GM10248 (cell line): ENCODE measurements at regions of chr10 and their contacts with region 1.

Region 1: DNA sequence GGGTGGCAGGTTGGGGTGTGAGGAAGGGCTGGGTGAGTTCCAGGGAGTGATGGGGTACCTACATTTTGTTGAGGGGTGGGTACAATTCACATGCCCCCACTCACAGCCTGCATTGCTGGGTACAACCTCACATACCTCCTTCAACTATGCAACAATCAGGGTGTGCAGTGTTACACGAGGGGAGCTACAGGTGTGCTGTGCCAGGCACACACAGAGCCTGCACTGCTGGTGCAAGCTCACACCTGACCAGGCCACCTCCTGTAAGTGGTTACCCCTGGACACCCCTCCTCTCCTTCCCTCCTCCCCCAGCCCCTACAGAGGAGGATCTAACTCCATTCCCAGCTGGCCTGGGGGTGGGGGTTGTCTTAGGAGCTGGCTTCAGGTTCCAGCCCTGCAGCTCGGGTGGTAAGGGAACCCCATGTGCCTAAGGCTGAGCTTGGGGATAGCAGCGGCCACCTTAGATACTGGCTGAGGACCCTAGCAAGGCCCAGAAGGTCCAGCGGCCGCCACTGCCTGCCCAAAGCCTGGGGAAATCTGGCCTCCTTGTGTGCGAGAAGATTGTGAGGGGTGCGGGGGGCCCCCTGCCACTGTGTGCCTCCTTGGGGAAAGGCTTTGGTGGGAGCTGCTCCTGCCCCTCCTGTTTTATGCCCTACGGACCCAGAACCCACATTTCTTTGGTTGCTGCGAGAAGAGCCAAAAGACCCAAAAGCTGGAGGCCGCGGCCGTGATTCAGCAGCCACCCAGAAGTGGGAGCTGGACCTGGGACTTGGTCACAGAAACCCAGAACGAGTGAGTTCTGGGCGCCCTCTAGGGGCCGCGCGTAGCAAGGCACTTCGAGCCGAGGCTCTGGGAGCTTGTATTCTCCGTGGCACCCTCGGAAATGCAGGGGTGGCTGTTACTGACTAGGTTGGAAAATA is 10.8 kb downstream of the TLX1 start:
- DNase-seq: peak; percentile 88
- CTCF ChIP-seq: peak; percentile 96

Region 2: DNA sequence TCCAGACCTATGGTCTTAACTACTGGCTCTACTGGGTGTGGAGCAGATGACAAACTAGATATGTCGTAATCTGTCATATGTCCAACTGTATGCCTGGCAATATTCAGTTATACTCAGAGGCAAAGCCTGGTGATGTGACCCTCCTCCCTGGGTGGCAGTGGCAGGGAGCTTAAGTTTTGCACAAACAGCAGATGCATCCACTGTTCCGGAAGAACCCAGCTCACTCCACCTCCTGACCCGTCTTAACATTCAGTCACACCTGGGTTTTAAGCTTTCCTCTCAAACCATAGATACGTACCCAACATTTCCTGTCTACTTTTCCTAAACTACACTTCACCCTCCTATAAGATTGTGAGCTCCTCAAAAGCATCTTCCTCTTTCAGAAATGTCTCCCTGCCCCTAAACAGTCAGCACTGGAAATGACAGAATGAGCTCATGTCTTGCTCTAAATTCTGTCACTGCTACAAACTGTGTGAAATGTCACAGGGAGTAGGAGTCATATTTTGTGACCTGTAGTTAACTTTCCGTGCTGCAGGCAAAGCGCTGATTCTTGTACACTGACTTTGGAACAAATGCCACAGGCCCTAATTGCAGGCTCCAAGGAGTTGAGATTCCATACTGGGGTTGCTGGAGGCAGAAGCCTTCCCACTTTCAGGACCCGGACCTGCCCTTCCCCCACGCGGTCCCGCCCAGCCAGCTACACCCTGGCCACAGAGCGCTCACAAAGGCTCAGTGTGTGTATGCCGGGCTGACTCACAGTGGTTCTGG is 771.0 kb before region 1 on chr10:
- CTCF ChIA-PET with region 1: no interaction called
- POLR2A ChIA-PET with region 1: no interaction called
- DNase-seq: peak; percentile 54
- CTCF ChIP-seq: no peak

Region 3: DNA sequence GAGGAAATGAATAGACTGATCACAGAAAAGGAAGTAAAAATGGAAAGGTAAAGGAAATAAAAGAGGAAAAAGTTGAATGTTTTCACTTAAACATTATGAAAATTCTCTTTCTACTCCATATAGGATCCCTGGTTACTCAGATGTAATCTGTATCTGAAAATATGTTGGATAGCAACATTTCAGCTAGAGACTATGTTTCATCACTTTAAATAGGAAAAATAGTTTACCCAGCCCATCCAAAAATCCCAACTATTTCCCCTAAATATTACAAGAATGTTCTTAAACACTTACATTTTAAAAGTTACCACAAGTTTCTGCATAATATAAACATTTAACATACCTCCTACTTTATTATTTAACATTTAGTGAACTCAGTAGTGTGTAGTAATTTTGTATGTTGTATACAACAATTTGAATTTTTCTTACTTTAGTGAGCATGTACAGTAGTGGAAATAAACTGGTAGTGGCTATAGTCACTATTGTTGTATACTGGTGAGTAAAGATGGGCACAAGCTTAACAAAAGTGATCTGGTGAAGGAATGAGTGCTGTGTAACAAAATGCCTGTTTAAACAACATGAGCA is 202.0 kb before region 1 on chr10:
- CTCF ChIA-PET with region 1: no interaction called
- POLR2A ChIA-PET with region 1: no interaction called
- DNase-seq: no peak
- CTCF ChIP-seq: no peak

Region 4: GRCh38 chr10:101031128-101031795 is 110.6 kb before region 1 on chr10 and contains the starts of genes PDZD7 and SFXN3:
- CTCF ChIA-PET with region 1: interaction called, 14 read pairs
- POLR2A ChIA-PET with region 1: no interaction called
- DNase-seq: peak; percentile 97
- CTCF ChIP-seq: no peak

Region 5: DNA sequence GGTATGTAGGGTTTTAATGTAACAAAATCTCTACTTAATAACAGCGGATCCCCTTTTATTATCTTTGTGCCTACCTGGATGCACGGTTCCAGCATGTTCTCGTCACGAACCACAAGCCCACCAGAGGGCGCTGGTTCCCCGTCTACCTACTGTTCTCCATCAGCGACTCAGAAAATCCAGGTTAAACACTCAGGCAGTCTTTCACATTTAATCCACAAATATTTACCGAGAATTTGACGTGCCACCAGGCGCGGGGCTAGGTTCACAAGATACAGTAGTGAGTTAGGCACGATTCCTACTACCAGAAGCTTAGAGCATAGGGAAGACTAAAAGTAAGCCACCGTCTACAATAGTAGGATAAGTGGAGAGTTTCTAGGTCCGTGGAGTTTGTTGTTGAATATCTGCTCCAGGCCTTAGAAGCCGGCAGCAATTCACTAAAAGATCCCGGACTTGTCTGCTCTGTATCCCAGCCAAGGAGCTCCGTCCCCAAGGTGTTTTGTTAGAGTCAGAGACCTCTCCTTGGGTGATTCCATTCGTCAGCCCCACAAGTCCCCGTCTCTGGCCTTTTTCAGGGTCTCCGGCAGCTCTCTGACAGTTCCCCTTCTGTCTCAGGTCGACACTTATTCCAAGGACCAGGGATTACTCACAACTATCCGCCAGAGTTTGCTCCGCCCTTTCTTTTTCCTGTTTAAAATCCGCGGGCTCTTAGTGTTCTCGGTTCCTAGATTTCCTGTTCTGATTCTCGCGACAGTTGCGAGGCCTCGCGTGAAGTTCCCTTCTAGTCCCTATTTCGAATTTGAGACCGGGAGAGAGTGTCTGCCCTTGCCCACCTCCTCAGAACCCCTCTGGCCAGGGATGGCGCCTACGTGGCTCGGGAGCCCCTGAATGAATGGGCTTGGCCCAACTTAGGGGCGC is 81.6 kb before region 1 on chr10:
- CTCF ChIA-PET with region 1: interaction called, 18 read pairs
- POLR2A ChIA-PET with region 1: interaction called, 3 read pairs
- DNase-seq: peak; percentile 85
- CTCF ChIP-seq: peak; percentile 90

Region 6: GRCh38 chr10:101080933-101081931 is 60.6 kb before region 1 on chr10:
- CTCF ChIA-PET with region 1: interaction called, 30 read pairs
- POLR2A ChIA-PET with region 1: no interaction called
- DNase-seq: peak; percentile 39
- CTCF ChIP-seq: no peak

Region 7: DNA sequence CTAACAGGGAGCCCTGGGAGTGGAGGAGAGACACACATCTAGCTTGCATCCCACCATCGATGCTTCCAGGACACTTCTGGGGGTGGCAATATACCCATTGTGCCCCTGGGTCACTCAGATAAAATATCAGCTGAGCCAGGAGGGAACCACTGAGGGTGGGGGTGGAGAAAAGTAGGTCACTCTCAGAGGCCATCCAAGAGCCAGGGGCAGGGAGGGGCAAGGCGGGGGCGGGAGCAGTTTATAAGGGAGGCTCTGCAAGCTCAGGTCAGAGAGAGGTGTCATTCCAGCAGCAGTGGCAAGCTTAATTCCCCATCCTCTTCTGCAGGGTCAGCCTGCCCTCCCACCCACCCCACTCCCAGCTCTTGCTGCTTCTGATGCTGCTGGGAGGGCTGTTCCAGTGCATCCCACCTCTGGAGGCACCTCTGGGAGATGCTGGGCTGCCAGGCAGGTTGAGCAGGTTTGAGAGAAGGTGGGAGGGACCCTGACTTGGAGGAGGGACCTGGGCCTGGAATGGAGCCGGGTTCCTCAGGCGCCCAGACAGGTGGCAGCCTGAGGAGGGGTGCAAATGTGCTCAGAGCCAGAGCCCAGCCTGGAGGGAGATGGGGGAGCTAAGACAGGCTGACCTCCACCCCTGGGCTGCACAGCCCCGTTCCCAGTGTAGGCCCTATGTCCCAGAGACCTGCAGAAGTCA is 30.9 kb before region 1 on chr10:
- CTCF ChIA-PET with region 1: interaction called, 19 read pairs
- POLR2A ChIA-PET with region 1: no interaction called
- DNase-seq: no peak
- CTCF ChIP-seq: no peak

Region 8: DNA sequence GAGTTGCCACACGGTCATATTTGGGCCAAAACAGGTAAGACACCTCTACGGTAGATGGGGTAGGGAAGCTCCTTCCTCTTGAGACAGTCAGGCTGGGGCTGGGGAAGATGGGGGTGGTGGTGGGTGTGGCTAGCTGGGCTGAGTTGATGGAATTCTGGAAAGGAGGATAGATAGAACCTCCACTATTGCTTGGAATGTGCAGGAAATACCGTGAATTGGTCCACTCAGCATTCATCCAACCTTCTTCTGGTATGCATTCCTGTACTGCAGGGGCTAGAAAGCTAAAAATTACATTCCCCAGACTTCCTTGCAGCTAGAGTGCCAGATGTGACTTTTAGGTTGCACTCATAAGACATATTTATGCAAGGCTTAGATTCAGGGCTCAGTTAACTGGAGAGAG is 14.0 kb after region 1 on chr10:
- CTCF ChIA-PET with region 1: interaction called, 76 read pairs
- POLR2A ChIA-PET with region 1: no interaction called
- DNase-seq: no peak
- CTCF ChIP-seq: no peak

Region 9: DNA sequence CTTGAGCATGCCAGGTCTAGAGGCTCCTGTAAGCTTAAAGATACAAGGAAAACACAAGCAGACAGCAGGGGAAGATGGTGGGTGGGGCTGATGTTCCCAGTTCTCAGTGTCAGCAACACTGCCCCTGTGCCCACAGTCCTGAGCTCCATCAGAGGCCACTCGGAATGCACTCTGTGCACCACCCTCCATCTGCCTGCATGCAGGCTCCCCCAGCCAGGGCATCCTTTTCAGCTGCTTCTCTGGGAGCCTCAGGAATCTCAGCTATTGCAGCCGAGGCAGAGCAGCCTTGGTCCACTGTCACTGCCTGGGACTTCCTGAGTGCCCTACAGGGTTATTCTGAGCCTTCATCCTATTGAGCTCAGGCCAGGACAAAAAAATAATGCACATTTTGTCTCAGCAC is 65.2 kb after region 1 on chr10:
- CTCF ChIA-PET with region 1: interaction called, 12 read pairs
- POLR2A ChIA-PET with region 1: no interaction called
- DNase-seq: no peak
- CTCF ChIP-seq: no peak